ENCODE measurements at regions of chr7 and their contacts with region 1.

Region 1: DNA sequence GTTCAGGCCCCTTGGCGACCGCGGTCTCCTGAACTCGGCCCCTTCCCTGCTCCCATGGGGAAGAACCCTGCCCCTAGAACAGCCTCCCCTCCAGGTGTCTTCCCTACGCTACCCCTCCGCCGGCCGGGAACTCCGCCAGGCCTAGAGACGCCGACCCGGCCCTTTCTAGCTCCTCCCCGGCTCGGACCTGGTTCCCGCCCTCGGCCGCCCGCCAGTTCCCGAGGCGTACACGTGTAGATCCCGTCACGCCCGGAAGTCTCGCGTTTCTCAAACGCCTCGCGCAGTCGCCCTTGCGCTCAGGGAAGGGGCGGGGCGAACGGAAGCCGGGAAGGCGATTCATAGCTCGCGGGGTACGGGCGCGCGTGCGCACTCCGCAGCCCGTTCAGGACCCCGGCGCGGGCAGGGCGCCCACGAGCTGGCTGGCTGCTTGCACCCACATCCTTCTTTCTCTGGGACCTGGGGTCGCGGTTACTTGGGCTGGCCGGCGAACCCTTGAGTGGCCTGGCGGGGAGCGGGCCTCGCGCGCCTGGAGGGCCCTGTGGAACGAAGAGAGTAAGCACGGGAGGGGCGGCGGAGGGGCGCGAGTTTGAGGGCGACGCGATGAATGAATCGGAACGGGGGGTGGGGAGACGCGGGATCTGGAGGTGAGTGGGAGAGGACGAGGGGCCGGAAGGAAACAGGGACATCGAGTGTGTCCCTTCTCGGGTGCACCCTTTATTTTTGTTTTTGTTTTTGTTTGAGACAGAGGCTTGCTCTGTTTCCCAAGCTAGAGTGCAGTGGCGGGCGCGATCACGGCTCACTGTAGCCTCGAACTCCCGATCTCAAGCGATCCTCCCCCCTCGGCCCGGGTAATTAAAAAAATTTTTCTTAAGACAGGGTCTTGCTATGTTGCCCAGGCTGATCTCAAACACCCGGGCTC is at the start of gene POP7:
- DNase-seq: peak; percentile 91 to 99
- H3K4me3 ChIP-seq: peak within 1 kb of the TSS; percentile 86
- H3K27ac ChIP-seq: peak within 1 kb of the TSS; percentile 43
- H3K4me1 ChIP-seq: peaks cover 12% of the 10 kb centered on the region; the same call in 1 of the 2 replicates
- H3K27me3 ChIP-seq: no peaks in the 10 kb centered on the region
- CTCF ChIP-seq: no peak
- total RNA-seq, gene POP7: 59.4 and 62.7 TPM in 2 replicates

Region 2: GRCh38 chr7:100126931-100127865 is 578.8 kb before region 1 on chr7 and contains the start of gene MBLAC1:
- CTCF ChIA-PET with region 1: interaction called, 13 read pairs
- POLR2A ChIA-PET with region 1: no interaction called
- intact Hi-C with region 1: no loop called
- DNase-seq: peak; percentile 68 to 92
- H3K4me3 ChIP-seq: peak within 1 kb of the TSS; percentile 75
- H3K27ac ChIP-seq: peak within 1 kb of the TSS; percentile 82
- H3K4me1 ChIP-seq: peaks cover 19% of the 10 kb centered on the region; the same call in 1 of the 2 replicates
- H3K27me3 ChIP-seq: no peaks in the 10 kb centered on the region
- CTCF ChIP-seq: no peak
- total RNA-seq, gene MBLAC1: 0.70 and 1.4 TPM in 2 replicates

Region 3: DNA sequence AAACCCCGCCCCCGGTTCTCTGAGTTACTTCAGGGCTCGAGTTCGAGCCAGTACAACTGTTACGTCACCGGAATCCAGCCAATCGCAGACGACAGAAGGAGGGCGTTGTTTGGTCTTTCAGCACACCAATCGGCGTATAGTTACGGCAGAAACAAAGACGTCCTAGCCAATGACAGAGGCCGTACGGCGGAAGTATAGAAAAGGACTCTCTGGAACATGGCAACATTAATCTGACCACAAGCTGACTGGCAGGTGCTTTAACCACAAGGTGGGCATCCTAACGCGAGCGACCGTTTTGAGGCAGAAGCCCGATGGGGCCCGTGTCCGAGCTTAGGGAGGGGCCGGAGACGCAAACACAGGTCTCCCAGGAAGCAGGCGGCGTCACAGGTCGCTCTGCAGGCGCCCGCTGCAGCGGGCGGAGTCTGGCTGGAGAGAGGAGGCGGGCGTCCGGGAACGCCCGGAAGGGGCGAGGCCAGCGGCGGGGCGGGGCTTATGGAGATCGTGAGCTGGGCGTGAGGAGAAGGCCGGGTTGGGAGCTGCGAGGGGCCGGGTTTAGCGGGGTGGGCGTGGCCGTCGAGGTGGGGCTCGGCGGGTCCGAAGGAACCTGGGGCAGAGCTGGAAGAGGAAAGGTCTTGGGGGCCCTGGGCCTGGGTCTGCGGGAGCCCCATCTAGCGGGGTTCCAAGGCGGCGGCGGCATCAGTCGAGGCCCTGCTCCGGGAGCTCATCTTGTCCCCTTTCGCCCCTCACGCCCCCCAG is 93.9 kb before region 1 on chr7 and contains the start of gene MOSPD3:
- CTCF ChIA-PET with region 1: no interaction called
- POLR2A ChIA-PET with region 1: interaction called, 11 read pairs
- intact Hi-C with region 1: no loop called
- DNase-seq: peak; percentile 98 to 99
- H3K4me3 ChIP-seq: peak within 1 kb of the TSS; percentile 74
- H3K27ac ChIP-seq: peak within 1 kb of the TSS; percentile 60
- H3K4me1 ChIP-seq: peaks cover 5% of the 10 kb centered on the region
- H3K27me3 ChIP-seq: no peaks in the 10 kb centered on the region
- CTCF ChIP-seq: no peak
- total RNA-seq, gene MOSPD3: 38.1 and 38.8 TPM in 2 replicates

Region 4: GRCh38 chr7:100665168-100665726 is 40.8 kb before region 1 on chr7:
- CTCF ChIA-PET with region 1: no interaction called
- POLR2A ChIA-PET with region 1: no interaction called
- intact Hi-C with region 1: no loop called
- DNase-seq: no peak
- H3K4me3 ChIP-seq: no peak overlapping the region
- H3K27ac ChIP-seq: no peak overlapping the region
- H3K4me1 ChIP-seq: no peaks in the 10 kb centered on the region; the same call in 1 of the 2 replicates
- H3K27me3 ChIP-seq: no peaks in the 10 kb centered on the region
- CTCF ChIP-seq: no peak

Region 5: GRCh38 chr7:100726996-100727761 is 21.2 kb after region 1 on chr7:
- CTCF ChIA-PET with region 1: interaction called, 25 read pairs
- POLR2A ChIA-PET with region 1: interaction called, 4 read pairs
- intact Hi-C with region 1: loop called (anchors 1 kb)
- DNase-seq: no peak
- H3K4me3 ChIP-seq: no peak overlapping the region
- H3K27ac ChIP-seq: no peak overlapping the region
- H3K4me1 ChIP-seq: peaks cover 19% of the 10 kb centered on the region
- H3K27me3 ChIP-seq: no peaks in the 10 kb centered on the region
- CTCF ChIP-seq: no peak

Region 6: GRCh38 chr7:100852048-100852872 is 146.2 kb after region 1 on chr7 and contains the start of gene SLC12A9:
- CTCF ChIA-PET with region 1: interaction called, 7 read pairs
- POLR2A ChIA-PET with region 1: interaction called, 9 read pairs
- intact Hi-C with region 1: loop called (anchors 1 kb)
- DNase-seq: peak; percentile 76 to 93
- H3K4me3 ChIP-seq: peak within 1 kb of the TSS; percentile 97
- H3K27ac ChIP-seq: no peak within 1 kb of the TSS
- H3K4me1 ChIP-seq: peaks cover 9% of the 10 kb centered on the region
- H3K27me3 ChIP-seq: no peaks in the 10 kb centered on the region
- CTCF ChIP-seq: peak; percentile 95
- total RNA-seq, gene SLC12A9: 34.7 and 36.7 TPM in 2 replicates

Region 7: GRCh38 chr7:101058355-101058754 is 352.3 kb after region 1 on chr7:
- CTCF ChIA-PET with region 1: no interaction called
- POLR2A ChIA-PET with region 1: no interaction called
- intact Hi-C with region 1: loop called (anchors 5 kb)
- DNase-seq: peak in 1 of 2 experiments; percentile 58
- H3K4me3 ChIP-seq: no peak overlapping the region
- H3K27ac ChIP-seq: no peak overlapping the region
- H3K4me1 ChIP-seq: no peaks in the 10 kb centered on the region
- H3K27me3 ChIP-seq: peaks cover 61% of the 10 kb centered on the region
- CTCF ChIP-seq: no peak

Measured in PC-9 (cell line).